ENCODE measurements at regions of chr12 and their contacts with region 1.

Region 1: DNA sequence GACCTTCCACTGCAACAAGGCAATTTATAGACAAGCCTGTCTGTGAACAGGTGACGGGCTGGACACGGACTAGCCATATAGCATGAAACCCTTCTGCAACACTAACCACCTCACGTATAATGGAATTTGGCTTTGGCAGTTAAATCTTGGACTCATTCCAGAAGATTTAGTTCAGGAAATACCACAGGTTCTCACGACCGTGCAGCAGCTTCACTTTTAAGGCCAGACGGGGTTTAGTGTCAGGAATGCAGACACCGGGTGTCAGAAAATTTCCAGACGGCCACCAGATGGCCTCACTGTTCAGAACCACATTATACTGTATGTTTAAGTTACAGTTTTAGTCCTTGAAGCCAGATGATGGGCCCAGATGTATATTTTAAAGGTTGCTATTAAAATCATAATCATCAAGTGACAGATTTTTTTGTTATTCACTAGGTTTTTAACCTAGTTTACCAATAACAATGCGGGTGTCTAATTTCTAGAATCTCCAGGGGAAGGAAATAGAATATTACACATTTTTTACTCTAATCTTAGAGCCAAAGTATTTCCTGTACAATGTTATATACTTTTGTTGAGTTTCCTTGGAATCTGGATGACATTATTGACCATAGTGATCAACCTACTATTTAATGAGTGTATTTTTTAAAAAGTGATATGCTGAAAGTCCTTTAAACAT is 90.5 kb upstream of the TMPO start:
- DNase-seq: peak; percentile 55
- ATAC-seq: peak; percentile 36
- H3K4me3 ChIP-seq: no peak overlapping the region
- H3K4me3 Mint-ChIP-seq: no peak overlapping the region
- H3K27ac ChIP-seq: no peak overlapping the region
- H3K27ac Mint-ChIP-seq: no peak overlapping the region
- H3K4me1 ChIP-seq: peaks cover 0 to 3% of the 10 kb centered on the region in 2 donors
- H3K4me1 Mint-ChIP-seq: no peaks in the 10 kb centered on the region
- H3K27me3 ChIP-seq: no peaks in the 10 kb centered on the region
- H3K27me3 Mint-ChIP-seq: peaks cover 3% of the 10 kb centered on the region
- CTCF ChIP-seq: peak; percentile 67

Region 2: DNA sequence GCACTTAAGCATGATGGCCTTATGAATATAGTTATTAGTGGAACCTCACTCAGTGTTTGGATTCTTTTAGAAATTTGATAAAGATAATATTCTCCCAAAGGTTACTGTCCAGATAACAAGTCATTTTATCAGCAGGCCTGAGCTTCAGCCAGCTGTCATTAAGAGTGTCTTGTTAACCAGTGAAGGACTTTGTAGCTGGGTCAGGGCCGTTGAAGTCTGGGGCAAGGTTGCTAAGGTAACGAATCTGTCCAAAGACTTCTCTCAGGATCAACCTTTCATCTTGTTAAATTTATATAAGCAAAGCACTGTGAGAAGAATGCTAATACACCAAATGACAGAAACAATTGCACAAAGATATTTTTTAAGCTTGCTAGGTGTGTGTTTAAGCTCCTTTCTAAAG is 180.7 kb before region 1 on chr12:
- CTCF ChIA-PET with region 1: no interaction called
- POLR2A ChIA-PET with region 1: no interaction called
- intact Hi-C with region 1: no loop called
- DNase-seq: no peak
- ATAC-seq: no peak
- H3K4me3 ChIP-seq: no peak overlapping the region
- H3K4me3 Mint-ChIP-seq: no peak overlapping the region
- H3K27ac ChIP-seq: no peak overlapping the region
- H3K27ac Mint-ChIP-seq: no peak overlapping the region
- H3K4me1 ChIP-seq: no peaks in the 10 kb centered on the region
- H3K4me1 Mint-ChIP-seq: no peaks in the 10 kb centered on the region
- H3K27me3 ChIP-seq: no peaks in the 10 kb centered on the region
- H3K27me3 Mint-ChIP-seq: no peaks in the 10 kb centered on the region
- CTCF ChIP-seq: no peak

Region 3: DNA sequence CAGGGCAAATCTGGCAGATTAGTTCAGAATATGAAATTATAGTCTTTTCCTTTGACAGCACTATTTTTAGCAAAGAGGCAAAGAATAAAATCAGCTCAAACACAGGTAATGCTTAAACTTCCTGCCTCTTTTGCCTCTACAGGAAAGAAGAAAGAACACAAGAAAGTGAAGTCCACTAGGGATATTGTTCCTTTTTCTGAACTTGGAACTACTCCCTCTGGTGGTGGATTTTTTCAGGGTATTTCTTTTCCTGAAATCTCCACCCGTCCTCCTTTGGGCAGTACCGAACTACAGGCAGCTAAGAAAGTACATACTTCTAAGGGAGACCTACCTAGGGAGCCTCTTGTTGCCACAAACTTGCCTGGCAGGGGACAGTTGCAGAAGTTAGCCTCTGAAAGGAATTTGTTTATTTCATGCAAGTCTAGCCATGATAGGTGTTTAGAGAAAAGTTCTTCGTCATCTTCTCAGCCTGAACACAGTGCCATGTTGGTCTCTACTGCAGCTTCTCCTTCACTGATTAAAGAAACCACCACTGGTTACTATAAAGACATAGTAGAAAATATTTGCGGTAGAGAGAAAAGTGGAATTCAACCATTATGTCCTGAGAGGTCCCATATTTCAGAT is 107.9 kb after region 1 on chr12:
- CTCF ChIA-PET with region 1: interaction called, 4 read pairs
- POLR2A ChIA-PET with region 1: no interaction called
- intact Hi-C with region 1: loop called (anchors 2 kb)
- DNase-seq: peak; percentile 67
- ATAC-seq: peak; percentile 31
- H3K4me3 ChIP-seq: no peak overlapping the region
- H3K4me3 Mint-ChIP-seq: no peak overlapping the region
- H3K27ac ChIP-seq: no peak overlapping the region
- H3K27ac Mint-ChIP-seq: peak overlapping the region; percentile 46
- H3K4me1 ChIP-seq: no peaks in the 10 kb centered on the region
- H3K4me1 Mint-ChIP-seq: peaks cover 2% of the 10 kb centered on the region
- H3K27me3 ChIP-seq: no peaks in the 10 kb centered on the region
- H3K27me3 Mint-ChIP-seq: no peaks in the 10 kb centered on the region
- CTCF ChIP-seq: peak; percentile 82

Region 4: DNA sequence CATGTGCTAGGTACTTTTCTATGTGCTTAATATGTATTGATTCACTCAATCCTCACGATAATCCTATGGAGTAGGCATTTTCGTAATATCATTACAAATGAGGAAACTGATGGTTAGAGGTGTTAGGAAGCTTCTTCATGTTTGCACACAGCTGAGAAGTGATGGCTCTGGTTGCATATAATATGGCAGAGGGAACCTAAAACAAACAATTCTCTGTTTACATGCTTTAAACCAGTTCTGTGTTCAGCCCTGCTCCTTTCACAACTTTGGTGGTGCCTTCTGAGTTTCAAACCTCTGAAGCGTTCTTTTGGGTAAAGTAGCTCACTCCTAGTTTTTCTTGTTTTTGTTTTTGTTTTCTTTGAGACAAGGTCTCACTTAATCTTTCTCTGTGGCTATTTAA is 125.9 kb after region 1 on chr12:
- CTCF ChIA-PET with region 1: no interaction called
- POLR2A ChIA-PET with region 1: no interaction called
- intact Hi-C with region 1: no loop called
- DNase-seq: no peak
- ATAC-seq: no peak
- H3K4me3 ChIP-seq: no peak overlapping the region
- H3K4me3 Mint-ChIP-seq: no peak overlapping the region
- H3K27ac ChIP-seq: no peak overlapping the region
- H3K27ac Mint-ChIP-seq: no peak overlapping the region
- H3K4me1 ChIP-seq: no peaks in the 10 kb centered on the region
- H3K4me1 Mint-ChIP-seq: no peaks in the 10 kb centered on the region
- H3K27me3 ChIP-seq: no peaks in the 10 kb centered on the region
- H3K27me3 Mint-ChIP-seq: no peaks in the 10 kb centered on the region
- CTCF ChIP-seq: no peak

Measured in B cell (primary cell).